Left cardiac atrium (tissue), 4 donors: ENCODE measurements at regions of chr7 and their contacts with region 1.

Region 1: DNA sequence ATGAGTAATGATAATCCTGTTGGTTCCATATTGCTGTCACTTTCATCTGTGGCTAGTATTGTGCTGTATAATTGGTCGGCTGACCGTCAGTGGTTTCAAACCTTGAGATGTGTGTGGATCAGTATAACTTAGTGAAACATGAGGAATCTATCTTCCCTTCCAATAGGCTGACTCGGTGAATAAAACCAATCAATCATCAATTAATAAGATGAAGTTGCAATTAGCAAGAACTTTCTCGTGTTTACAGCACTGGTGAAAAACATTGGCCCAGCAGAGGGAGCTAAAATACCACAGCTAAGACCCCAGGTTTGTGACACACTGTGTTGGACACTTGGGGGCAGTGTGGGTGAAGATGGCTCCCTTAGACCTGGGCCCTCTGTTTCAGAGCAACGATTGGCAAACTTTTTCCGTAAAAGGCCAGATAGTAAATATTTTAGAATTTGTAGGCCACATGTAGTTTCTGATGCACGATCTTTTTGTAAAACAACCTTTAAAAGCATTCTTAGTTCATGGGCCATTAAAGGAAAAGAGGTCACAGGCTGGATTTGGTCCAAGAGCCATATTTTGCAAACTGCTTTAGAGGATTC is 47.8 kb downstream of the STRA8 start:
- DNase-seq: peak; percentile 80
- ATAC-seq: peak; percentile 96 to 98

Region 2: DNA sequence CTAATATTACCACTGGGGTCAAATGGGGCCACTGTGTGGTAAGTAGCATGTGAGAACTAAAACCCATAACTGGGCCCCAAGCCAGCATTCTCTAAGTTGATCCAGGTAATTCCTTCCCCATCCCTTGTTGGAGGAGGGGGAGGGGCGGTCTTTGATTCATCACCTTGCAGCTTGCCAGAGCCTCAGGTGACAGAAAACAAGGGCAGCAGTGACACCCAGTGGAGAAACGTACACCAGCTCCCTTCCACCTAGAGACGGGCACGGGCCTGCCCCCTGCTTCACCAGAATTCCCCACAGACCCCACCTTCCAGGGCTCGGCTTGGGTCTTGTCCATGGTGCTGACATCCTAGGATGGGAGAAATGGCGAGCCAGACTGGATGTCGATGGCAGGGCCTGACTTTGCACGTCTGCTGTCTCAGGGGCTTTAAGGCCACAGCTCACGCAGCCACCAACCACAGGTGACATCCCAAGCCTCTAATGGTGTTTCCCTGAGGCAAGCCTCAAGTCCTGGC is 54.2 kb after region 1 on chr7:
- intact Hi-C with region 1: loop called in 1 of 2 experiments (anchors 5 kb)
- DNase-seq: no peak
- ATAC-seq: peak; percentile 64 to 65

Region 3: DNA sequence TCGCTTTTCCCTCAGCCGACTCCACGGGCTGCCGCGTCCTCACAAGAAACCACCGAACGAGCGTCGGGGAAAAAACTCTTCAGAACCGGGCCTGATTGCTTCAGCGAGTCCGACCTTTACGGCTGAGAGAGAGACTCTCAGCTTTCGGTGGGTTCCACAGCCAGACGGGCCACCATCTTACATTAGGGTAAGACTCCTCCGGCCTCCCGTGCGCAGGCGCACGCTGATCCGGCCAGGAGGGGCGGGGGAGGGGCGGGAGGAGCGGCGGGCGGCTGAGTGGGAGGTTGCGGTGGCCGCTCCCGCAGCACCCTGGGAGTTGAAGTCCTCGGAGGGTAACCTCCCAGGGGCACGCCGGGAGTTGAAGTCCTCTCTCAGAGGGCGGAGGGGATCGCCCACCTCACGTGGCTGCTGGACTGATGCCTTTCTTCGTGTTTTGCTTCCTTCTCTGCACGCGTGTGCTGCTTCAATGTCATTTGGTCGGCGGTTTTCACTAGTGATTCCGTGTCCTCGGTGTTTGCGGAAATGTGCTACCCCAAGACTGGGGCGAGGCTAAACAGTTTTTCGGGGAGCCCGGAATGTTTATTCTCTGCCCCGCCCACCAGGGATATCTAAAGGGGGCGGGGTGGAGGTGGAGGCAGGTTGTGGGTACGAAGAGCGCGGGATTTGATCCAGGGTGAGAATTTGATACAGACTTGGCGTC is 228.6 kb after region 1 on chr7 and contains the start of gene CNOT4:
- intact Hi-C with region 1: no loop called
- DNase-seq: peak; percentile 97
- ATAC-seq: peak; percentile 99
- total RNA-seq, gene CNOT4: 25.0 to 28.0 TPM

Region 4: DNA sequence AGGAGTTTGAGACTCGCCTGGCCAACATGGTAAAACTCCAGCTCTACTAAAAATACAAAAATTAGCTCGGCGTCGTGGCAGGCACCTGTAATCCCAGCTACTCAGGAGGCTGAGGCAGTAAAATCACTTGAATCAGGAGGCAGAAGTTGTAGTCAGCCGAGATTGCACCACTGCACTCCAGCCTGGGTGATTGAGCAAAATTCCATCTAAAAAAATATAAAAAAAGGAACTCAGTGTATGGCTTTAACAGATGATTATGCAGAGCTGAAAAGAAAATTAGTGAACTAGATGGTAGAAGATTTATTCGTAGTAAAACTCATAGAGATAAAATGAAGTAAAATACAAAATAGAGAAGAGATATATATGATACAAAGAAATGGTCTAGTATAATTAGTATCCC is 241.1 kb after region 1 on chr7:
- intact Hi-C with region 1: no loop called
- DNase-seq: no peak
- ATAC-seq: no peak

Region 5: DNA sequence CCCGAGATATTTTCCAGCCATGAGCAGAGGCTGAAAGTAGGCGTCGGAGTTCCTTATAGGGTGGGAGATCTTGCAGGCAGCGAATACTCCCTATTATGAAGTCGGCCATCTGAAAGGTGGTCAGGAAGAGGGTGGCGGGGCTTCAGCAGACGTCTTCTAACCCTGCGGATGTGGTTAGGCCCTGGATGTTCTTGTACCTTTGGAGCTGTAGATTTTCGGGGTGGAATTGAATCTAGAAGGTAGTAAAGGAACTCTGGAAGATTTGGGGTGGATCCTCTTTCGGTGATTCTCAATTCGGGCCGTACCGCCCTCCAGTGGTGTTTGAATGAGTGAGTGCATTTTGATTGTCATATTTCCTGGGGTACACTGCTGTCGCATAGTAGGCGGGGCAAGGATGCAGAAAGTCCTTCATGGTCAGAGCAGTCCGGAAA is 276.9 kb after region 1 on chr7:
- intact Hi-C with region 1: loop called (anchors 1 to 5 kb)
- DNase-seq: peak; percentile 58
- ATAC-seq: peak; percentile 74 to 79